Ascending aorta (tissue), 2 donors: ENCODE measurements at regions of chr19 and their contacts with region 1.

Region 1: DNA sequence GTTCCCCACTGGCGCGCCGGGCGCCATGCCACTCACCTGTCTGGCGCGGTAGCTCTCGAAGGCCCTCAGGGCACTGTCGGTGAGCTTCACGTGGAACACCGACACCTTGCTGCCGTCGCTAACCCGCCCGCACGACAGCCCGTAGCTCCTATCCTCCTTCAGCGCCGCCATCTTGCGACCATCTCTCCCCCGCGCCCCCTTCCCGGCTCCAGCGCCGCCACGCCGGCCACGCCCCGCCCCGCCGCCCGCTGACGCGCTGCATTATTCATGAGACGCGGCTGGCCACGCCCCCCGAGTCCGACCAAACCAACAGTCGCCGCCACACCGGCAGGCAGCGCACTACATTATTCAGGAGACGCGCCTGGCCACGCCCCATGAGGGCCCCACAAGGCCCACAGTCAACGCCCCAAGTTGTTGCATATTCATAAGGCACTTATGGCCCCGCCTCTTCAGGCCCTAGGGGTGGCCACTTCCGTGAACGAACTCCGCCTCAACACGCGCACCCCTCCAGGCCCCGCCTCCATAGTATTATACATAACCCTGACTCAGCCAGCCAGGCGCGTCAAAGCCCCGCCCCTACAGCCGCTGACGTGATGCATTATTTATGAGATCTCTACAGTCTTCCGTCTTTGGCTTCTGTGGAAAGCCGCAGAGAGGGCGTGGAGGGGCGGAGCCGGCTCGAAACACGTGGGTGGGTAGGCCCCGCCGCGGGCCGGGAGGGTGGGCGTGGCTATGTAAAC is at the start of gene ELL:
- DNase-seq: peak; percentile 100
- H3K4me3 ChIP-seq: peak within 1 kb of the TSS; percentile 97 to 99
- H3K27ac ChIP-seq: peak within 1 kb of the TSS; percentile 97 to 99
- H3K4me1 ChIP-seq: peaks cover 3 to 10% of the 10 kb centered on the region in 2 donors
- H3K27me3 ChIP-seq: no peaks in the 10 kb centered on the region
- CTCF ChIP-seq: peak in 1 of 3 experiments; percentile 31
- total RNA-seq, gene ELL: 30.5 TPM

Region 2: DNA sequence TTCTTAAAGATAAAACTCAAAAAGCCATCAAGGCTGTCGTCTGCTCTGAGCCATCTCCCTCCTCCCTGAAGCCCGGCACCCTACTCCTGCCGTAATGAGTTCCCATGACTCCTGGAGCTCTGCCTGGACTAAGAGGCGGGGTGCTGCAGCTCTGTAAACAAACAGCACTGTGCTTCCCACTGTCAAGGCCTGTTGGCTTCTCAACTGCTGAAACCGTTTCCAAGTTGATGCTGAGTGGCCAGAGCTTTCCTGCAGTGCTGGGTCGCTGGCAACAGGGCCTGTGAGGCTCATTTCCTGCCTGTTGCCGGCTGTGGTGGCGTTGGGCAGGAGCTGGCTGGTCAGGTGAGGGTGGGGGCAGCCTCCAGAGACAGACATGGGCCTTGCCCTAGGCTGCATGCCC is 57.4 kb before region 1 on chr19:
- intact Hi-C with region 1: loop called (anchors 1 kb)
- DNase-seq: peak; percentile 71 to 93
- H3K4me3 ChIP-seq: no peak overlapping the region
- H3K27ac ChIP-seq: peak overlapping the region; percentile 89 to 94
- H3K4me1 ChIP-seq: peaks cover 23 to 67% of the 10 kb centered on the region in 2 donors
- H3K27me3 ChIP-seq: no peaks in the 10 kb centered on the region
- CTCF ChIP-seq: no peak

Region 3: DNA sequence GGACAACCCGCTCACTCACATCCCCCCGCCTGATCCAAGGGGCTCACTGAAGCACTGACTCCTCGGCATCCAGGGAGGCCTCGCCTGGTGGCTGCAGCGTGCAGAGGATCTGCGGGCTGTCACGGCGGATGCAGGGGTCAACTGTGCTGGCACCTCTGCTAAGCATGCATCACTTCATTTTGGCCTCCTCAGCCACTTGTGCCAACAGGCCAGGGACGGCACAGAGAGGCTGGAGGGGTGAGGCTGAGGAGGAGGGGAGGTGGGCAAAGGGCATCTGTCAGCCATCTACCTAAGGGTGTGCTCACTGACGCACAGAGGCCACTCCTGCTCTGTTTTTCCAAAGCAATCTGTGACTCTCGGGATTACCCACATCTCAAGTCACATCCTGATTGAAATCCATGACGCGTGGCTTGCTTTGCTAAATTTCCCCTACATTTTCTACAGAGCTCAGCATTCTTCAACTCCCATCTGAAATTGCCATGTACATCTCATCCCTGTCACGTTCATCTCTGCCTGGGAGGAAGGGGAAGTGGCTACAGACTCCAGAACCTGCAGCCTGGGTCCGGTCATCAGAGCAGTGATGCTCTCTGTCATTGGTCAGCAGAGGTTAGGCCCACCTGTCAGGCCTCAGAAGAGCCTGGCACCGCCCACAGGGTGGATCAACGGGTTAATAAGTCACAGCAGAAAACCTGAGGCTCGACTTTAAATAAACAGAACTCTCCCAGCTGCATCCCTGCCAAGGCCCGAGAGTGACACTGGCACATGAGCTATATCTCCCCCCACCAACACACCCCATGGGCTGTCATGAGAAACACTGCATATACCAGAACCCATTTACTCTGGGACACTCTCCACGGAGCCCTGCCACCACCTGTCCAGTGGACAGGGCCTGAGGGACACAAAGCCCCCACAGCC is 17.8 kb before region 1 on chr19:
- intact Hi-C with region 1: loop called (anchors 1 kb)
- DNase-seq: no peak
- H3K4me3 ChIP-seq: no peak overlapping the region
- H3K27ac ChIP-seq: peak overlapping the region; percentile 81 to 88
- H3K4me1 ChIP-seq: peaks cover 63 to 97% of the 10 kb centered on the region in 2 donors
- H3K27me3 ChIP-seq: no peaks in the 10 kb centered on the region
- CTCF ChIP-seq: no peak

Region 4: DNA sequence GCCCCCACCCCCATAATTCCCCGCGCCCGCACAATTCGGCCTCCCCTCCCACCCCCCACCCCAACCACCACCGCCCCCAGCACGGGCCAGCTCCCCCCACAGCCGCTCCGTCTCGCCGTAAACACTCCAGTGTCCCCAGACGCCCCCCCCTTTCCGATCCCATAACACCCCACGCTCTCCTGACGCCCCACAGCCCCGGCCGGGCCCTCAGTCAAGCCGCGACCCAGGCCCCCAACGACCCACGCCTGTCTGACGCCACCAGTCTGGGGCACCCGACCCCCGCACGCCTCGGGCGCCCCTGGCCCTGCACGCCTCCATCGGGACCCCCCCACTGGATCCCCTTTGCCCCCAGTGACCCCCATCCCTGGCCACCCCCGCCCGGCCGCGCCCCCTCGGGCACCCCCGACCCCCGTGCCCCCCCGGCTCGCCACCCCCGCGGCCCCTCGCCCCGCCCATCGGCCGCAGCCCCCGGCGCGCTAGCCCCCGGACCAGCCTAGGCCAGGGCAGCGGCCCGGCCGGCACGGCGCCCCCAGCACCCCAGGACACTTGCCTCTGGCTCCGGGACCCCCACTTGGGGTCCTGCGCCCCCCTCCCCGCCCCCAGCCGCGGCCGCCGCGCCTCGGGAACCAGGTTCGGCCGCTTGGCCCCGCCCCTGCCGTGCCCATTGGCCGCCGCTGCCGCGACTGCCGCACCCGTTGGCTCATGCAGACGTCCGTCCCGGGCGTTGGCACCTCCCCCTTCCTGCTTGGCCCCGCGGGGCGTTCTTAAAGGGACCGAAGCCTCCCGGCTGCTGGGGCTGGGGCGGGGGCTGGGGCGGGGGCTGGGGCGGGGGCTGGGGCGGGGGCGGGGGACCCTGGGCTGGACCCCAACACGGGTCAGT is 21.1 kb after region 1 on chr19 and contains the start of gene FKBP8:
- intact Hi-C with region 1: loop called (anchors 1 kb)
- DNase-seq: peak; percentile 70 to 96
- H3K4me3 ChIP-seq: peak within 1 kb of the TSS; percentile 70 to 85
- H3K27ac ChIP-seq: peak within 1 kb of the TSS; percentile 87 to 88
- H3K4me1 ChIP-seq: peaks cover 4 to 10% of the 10 kb centered on the region in 2 donors
- H3K27me3 ChIP-seq: no peaks in the 10 kb centered on the region
- CTCF ChIP-seq: no peak
- total RNA-seq, gene FKBP8: 395 TPM

Region 5: GRCh38 chr19:18557474-18558201 is 35.6 kb after region 1 on chr19 and contains the start of gene KXD1:
- intact Hi-C with region 1: loop called (anchors 1 kb)
- DNase-seq: peak; percentile 95 to 99
- H3K4me3 ChIP-seq: peak within 1 kb of the TSS; percentile 79 to 95
- H3K27ac ChIP-seq: peak within 1 kb of the TSS; percentile 98
- H3K4me1 ChIP-seq: peaks cover 5 to 34% of the 10 kb centered on the region in 2 donors
- H3K27me3 ChIP-seq: no peaks in the 10 kb centered on the region
- CTCF ChIP-seq: no peak
- total RNA-seq, gene KXD1: 178 TPM

Region 6: DNA sequence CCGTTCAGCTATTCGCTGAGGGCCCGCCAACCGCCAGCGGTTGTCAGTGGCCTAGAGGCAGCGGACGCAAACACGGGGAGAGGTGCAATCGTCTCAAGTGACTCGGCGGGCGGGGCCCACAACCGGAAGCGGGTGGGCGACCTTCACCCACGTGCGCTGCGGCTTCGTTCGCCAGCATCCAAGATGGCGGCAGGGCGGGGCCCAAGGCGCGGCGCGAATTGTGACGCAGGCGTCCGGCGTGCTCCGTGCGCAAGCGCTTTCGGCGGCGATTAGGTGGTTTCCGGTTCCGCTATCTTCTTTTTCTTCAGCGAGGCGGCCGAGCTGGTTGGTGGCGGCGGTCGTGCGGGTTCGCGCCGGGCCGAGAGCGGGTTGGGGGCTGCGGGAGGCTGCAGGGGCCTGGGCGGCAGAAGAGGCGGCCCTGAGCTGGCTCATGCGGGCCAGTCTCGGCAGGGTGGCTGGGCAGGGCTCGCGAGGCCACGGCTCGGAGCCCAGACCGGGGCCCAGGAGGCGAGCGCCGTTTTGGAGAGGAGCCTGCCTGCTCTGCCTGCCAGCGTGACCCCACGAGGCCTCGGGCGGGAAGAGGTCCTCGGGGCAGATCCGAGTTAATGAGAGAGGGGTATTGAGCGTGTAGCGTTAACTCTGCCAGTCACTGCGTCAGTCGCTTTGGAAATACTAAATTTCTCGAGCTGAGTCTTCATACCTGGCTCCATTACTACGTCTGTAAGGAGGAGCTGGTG is 49.7 kb after region 1 on chr19 and contains the start of gene UBA52:
- intact Hi-C with region 1: loop called (anchors 1 kb)
- DNase-seq: peak; percentile 92 to 99
- H3K4me3 ChIP-seq: peak within 1 kb of the TSS; percentile 74 to 83
- H3K27ac ChIP-seq: peak within 1 kb of the TSS; percentile 84 to 95
- H3K4me1 ChIP-seq: peaks cover 11 to 15% of the 10 kb centered on the region in 2 donors
- H3K27me3 ChIP-seq: no peaks in the 10 kb centered on the region
- CTCF ChIP-seq: no peak
- total RNA-seq, gene UBA52: 554 TPM

Region 7: GRCh38 chr19:18636183-18636968 is 114.3 kb after region 1 on chr19:
- intact Hi-C with region 1: loop called (anchors 1 kb)
- DNase-seq: peak; percentile 89 to 99
- H3K4me3 ChIP-seq: peak overlapping the region; percentile 85 to 95
- H3K27ac ChIP-seq: peak overlapping the region; percentile 88 to 94
- H3K4me1 ChIP-seq: peaks cover 7 to 9% of the 10 kb centered on the region in 2 donors
- H3K27me3 ChIP-seq: no peaks in the 10 kb centered on the region
- CTCF ChIP-seq: no peak